OCI-LY7 (cell line): ENCODE measurements at regions of chr9 and their contacts with region 1.

Region 1: DNA sequence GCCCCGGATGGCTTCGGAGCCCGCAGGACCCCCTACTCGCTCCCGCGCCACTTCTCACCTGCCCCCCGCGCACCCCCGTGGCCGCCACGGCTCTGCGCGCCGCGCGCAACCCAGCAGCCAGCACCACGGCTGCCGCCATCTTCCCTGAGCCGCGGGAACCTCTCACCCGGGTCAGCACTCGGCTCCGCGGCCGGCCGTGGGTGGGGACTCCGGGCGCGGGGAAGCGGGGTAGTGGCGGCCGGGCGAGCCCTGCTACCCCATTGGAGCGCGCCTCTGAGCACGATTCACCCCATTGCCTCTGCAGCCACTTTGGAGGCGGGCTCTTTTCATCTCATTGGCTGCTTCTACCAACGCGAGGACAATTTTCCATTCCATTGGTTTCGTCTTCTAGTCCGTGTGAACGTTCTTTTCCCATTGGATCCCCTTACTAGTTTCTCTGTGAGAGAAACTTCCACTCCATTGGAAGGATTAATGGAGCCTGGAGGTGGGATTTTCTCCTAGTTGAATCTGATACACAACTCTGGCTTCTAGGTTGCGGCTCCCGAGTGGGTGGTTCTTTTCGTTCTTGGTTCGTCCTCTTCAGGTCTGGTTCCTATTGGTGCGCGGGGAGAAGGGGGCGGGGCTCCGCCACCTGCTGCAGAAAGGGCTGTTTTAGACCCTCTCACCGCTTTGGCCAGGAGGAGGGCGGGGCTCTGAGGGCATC is at the start of gene HINT2:
- DNase-seq: peak; percentile 98
- H3K4me3 ChIP-seq: peak within 1 kb of the TSS; percentile 93
- H3K27ac ChIP-seq: peak within 1 kb of the TSS; percentile 82
- H3K4me1 ChIP-seq: peaks cover 29% of the 10 kb centered on the region
- CTCF ChIP-seq: no peak
- total RNA-seq, gene HINT2: 74.3 and 82.5 TPM in 2 replicates

Region 2: DNA sequence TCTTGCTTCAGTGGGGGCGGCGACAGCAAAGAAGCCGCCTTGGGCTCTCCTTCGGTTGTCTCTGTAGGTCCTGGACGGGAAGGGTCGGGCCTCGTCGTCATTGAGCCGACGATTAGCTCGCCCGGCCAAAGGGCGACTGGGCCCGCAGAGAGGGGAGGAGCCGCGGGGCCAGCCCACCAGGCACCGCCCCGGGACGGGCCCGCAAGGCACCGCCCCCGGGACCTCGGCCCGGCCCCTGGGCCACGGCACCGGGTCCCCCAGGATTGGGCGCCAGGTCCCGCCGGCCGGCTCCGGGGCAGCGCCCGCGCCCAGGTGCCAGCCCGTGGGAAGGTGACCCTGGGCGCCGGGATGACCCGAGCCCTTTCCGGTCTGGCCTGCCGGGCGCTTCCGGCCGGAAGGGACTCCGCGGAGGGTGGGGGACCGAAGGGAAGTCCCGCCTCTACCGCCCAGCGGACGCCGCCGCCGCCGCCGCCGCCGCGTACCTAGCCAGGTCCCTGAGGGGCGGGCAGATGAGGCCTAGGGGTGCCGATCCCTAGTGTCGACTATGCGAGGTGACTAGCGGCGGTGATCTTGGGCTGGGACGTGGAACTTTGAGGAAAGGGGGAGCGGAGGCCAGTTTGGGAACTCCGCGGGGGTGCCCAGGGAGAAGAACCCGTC is 66.0 kb before region 1 on chr9 and contains the starts of genes GBA2 and RGP1:
- CTCF ChIA-PET with region 1: no interaction called
- POLR2A ChIA-PET with region 1: interaction called, 7 read pairs
- intact Hi-C with region 1: loop called (anchors 2 kb)
- DNase-seq: peak; percentile 79
- H3K4me3 ChIP-seq: peak within 1 kb of the TSS; percentile 89
- H3K27ac ChIP-seq: peak within 1 kb of the TSS; percentile 51
- H3K4me1 ChIP-seq: peaks cover 51% of the 10 kb centered on the region
- CTCF ChIP-seq: no peak
- total RNA-seq, gene GBA2: 66.0 and 75.4 TPM in 2 replicates
- total RNA-seq, gene RGP1: 12.3 and 13.5 TPM in 2 replicates

Region 3: GRCh38 chr9:35756275-35757225 is 58.4 kb before region 1 on chr9:
- CTCF ChIA-PET with region 1: no interaction called
- POLR2A ChIA-PET with region 1: no interaction called
- intact Hi-C with region 1: loop called (anchors 2 kb)
- DNase-seq: peak; percentile 91
- H3K4me3 ChIP-seq: peak overlapping the region; percentile 74
- H3K27ac ChIP-seq: peak overlapping the region; percentile 94
- H3K4me1 ChIP-seq: peaks cover 66% of the 10 kb centered on the region
- CTCF ChIP-seq: peak; percentile 84

Region 4: GRCh38 chr9:35829084-35829763 is 14.2 kb after region 1 on chr9 and contains the start of gene TMEM8B:
- CTCF ChIA-PET with region 1: no interaction called
- POLR2A ChIA-PET with region 1: interaction called, 5 read pairs
- intact Hi-C with region 1: loop called (anchors 1 kb)
- DNase-seq: peak; percentile 94
- H3K4me3 ChIP-seq: peak within 1 kb of the TSS; percentile 72
- H3K27ac ChIP-seq: no peak within 1 kb of the TSS
- H3K4me1 ChIP-seq: peaks cover 32% of the 10 kb centered on the region
- CTCF ChIP-seq: no peak
- total RNA-seq, gene TMEM8B: 3.1 and 3.2 TPM in 2 replicates